Panc1 (cell line): ENCODE measurements at regions of chr17 and their contacts with region 1.

Region 1: DNA sequence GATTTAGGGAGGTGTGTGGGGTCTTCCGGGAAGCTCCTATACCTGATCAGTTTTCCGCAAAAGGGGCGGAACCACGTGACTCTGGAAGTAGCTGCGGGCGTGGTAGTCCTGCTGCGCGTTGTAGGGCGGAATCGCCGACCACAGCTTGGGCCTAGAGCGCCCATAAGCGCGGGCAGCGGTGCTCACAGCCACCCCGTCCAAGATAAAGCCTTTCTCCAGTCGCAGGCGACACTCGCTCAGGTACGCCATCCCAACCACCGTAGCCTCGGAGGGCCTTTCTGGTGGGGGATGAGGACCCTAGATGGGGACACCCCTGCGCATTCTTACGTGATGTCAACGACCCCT is 12.4 kb downstream of the RPL23 start:
- DNase-seq: no peak
- ATAC-seq: peak; percentile 75
- H3K4me3 ChIP-seq: peak overlapping the region; percentile 28 to 48
- H3K27ac ChIP-seq: peak overlapping the region; percentile 61
- H3K4me1 ChIP-seq: peaks cover 3% of the 10 kb centered on the region; the same call in 1 of the 2 replicates
- H3K27me3 ChIP-seq: no peaks in the 10 kb centered on the region
- CTCF ChIP-seq: no peak

Region 2: DNA sequence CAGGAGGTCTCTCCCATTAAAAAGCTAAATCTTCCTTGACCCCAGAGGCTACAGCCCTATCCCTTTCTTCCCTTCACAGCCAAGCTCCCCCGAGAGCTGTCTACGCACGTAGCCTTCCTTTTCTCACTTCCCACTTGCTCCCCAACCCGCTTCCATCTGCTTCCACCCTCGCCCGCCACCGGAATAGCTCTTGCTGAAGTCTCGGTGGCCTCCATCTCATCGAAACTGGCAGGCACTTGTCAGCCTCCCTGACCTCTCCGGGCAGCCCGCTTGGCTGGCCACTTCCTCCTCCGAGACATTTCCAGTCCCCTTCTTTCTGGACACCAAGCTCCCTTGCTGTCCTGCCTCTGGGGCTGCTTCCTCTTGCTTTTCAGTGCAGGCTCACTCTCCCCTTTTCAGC is 155.6 kb before region 1 on chr17:
- CTCF ChIA-PET with region 1: no interaction called
- POLR2A ChIA-PET with region 1: interaction called, 18 read pairs
- in situ Hi-C with region 1: no loop called
- intact Hi-C with region 1: no loop called
- DNase-seq: no peak
- ATAC-seq: no peak
- H3K4me3 ChIP-seq: no peak overlapping the region
- H3K27ac ChIP-seq: no peak overlapping the region
- H3K4me1 ChIP-seq: no peaks in the 10 kb centered on the region
- H3K27me3 ChIP-seq: no peaks in the 10 kb centered on the region
- CTCF ChIP-seq: no peak

Region 3: DNA sequence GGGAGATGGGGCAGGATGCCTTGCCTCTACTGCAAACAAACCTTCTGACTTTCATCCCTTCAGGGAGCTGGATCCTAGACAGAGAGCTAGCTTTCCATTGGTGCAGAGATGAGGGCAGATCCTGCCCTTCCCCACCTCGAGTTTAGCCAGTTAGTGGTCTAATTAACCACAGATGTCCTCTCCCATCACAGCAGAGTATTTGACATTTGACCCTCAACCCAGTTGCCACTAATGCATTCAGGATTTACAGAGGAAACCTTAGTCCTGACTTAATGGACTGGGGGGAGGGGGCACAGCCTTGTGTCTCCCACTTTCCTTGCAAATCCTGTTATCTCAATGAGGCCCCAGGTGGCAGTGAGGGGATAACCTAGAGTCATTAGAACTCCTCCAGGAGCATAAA is 51.9 kb before region 1 on chr17:
- CTCF ChIA-PET with region 1: no interaction called
- POLR2A ChIA-PET with region 1: interaction called, 10 read pairs
- in situ Hi-C with region 1: no loop called
- intact Hi-C with region 1: no loop called
- DNase-seq: no peak
- ATAC-seq: no peak
- H3K4me3 ChIP-seq: no peak overlapping the region
- H3K27ac ChIP-seq: no peak overlapping the region
- H3K4me1 ChIP-seq: peaks cover 4% of the 10 kb centered on the region; the same call in 1 of the 2 replicates
- H3K27me3 ChIP-seq: no peaks in the 10 kb centered on the region
- CTCF ChIP-seq: no peak

Region 4: GRCh38 chr17:38853292-38854219 is 12.4 kb after region 1 on chr17 and contains the start of gene RPL23:
- CTCF ChIA-PET with region 1: no interaction called
- POLR2A ChIA-PET with region 1: no interaction called
- in situ Hi-C with region 1: no loop called
- intact Hi-C with region 1: no loop called
- DNase-seq: peak; percentile 74
- ATAC-seq: peak; percentile 94
- H3K4me3 ChIP-seq: peak within 1 kb of the TSS; percentile 89 to 97
- H3K27ac ChIP-seq: peak within 1 kb of the TSS; percentile 83
- H3K4me1 ChIP-seq: peaks cover 8% of the 10 kb centered on the region
- H3K27me3 ChIP-seq: no peaks in the 10 kb centered on the region
- CTCF ChIP-seq: no peak
- total RNA-seq, gene RPL23: 649 TPM

Region 5: DNA sequence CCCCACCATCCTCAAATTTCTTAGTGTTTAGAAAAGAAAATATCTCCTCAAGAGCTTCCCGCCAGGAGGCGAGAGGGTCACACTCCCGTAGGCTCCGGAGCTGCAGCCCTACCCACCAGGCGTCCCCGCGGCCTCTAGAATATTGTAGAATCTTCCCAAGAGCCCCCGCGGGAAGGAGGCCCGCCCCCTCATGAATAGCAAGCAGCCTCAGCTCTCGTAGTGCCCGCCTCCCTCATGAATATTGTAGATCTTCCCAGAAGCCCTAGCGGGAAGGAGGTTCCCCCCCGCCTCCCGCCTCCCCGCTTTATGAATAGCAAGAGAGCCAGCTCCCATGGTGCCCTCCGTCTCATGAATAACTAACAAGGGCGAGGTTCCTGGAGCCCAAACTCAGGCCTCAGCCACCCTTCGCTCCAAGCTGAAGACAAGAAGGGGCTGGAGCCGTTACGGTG is 126.2 kb after region 1 on chr17 and contains the start of gene FBXO47:
- CTCF ChIA-PET with region 1: no interaction called
- POLR2A ChIA-PET with region 1: no interaction called
- in situ Hi-C with region 1: no loop called
- intact Hi-C with region 1: no loop called
- DNase-seq: no peak
- ATAC-seq: peak; percentile 99
- H3K4me3 ChIP-seq: peak within 1 kb of the TSS; percentile 34 to 66
- H3K27ac ChIP-seq: peak within 1 kb of the TSS; percentile 71
- H3K4me1 ChIP-seq: peaks cover 6% of the 10 kb centered on the region
- H3K27me3 ChIP-seq: no peaks in the 10 kb centered on the region
- CTCF ChIP-seq: no peak
- total RNA-seq, gene FBXO47: not detected

Region 6: DNA sequence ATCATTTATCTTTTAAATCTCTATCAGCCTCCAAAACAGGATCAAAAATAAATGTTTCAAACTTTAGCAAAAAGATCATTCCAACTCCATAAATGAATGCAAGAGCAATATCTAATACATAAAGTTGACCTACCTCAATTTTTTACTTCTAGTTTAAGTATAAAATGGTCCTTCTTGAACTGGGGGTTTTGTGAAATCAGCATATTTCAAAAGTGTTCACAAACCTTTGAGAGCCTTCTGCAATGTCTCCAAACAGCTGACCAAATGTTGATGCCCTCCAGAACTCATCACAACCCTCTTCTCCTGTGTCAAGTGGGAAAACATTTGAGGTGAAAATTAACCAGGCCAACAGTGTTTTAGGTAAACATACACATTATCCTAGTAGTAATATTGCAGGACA is 602.2 kb after region 1 on chr17:
- CTCF ChIA-PET with region 1: interaction called, 11 read pairs
- POLR2A ChIA-PET with region 1: no interaction called
- in situ Hi-C with region 1: no loop called
- intact Hi-C with region 1: no loop called
- DNase-seq: no peak
- ATAC-seq: no peak
- H3K4me3 ChIP-seq: no peak overlapping the region
- H3K27ac ChIP-seq: no peak overlapping the region
- H3K4me1 ChIP-seq: no peaks in the 10 kb centered on the region
- H3K27me3 ChIP-seq: no peaks in the 10 kb centered on the region
- CTCF ChIP-seq: no peak